Heart left ventricle (tissue), 16 donors: ENCODE measurements at regions of chr1 and their contacts with region 1.

Region 1: DNA sequence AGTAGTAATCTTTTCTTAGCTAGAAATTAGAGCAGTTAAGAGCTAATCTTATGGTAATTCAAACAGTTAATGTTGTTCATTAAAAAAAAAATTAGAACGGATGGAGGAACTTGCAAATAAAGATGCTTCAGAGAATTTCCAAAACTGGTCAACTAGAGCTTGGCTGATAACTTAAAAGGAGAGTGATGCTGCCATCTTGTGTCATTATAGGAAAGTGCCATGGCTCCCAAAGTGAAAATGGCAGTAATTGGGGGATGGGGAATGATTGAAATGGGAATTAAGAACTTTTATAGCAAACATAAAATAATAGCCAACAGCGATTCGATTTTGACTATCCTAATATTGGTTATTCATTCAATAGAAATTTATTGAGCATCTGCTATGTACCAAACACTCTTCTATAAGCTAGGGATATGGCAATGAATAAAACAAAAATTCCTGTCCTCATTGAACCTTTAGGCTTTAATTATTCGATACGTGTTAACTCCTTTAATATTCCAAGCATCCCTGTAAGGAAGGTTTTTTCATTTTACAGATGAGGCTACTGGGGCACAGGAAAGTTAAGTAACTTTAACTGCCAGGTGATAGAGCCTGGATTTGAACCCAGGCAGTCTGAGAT is 5.7 kb upstream of the PLPP3 start:
- DNase-seq: no peak
- ATAC-seq: peak in 3 of 4 donors; percentile 54 to 78 (median 68)
- H3K4me3 ChIP-seq: no peak overlapping the region
- H3K27ac ChIP-seq: no peak overlapping the region
- H3K4me1 ChIP-seq: peaks cover 0 to 9% (median 3%) of the 10 kb centered on the region in 12 donors
- H3K27me3 ChIP-seq: no peaks in the 10 kb centered on the region
- CTCF ChIP-seq: peak; percentile 76 to 91 (median 86)
- POLR2A ChIP-seq: no peak

Region 2: GRCh38 chr1:55140546-55140983 is 1444.5 kb before region 1 on chr1:
- intact Hi-C with region 1: loop called in 5 of 10 experiments (anchors 5 to 10 kb)
- DNase-seq: peak in 4 of 5 donors; percentile 66 to 83 (median 71)
- ATAC-seq: peak; percentile 90 to 98 (median 95)
- H3K4me3 ChIP-seq: no peak overlapping the region
- H3K27ac ChIP-seq: peak overlapping the region in 1 of 12 donors; percentile 59
- H3K4me1 ChIP-seq: peaks cover 0 to 11% (median 0%) of the 10 kb centered on the region in 12 donors
- H3K27me3 ChIP-seq: no peaks in the 10 kb centered on the region
- CTCF ChIP-seq: peak; percentile 67 to 92 (median 84)
- POLR2A ChIP-seq: no peak

Region 3: GRCh38 chr1:55284852-55285251 is 1300.2 kb before region 1 on chr1:
- intact Hi-C with region 1: loop called (anchors 1 to 5 kb)
- DNase-seq: peak in 2 of 5 donors; percentile 36 to 41
- ATAC-seq: peak in 3 of 4 donors; percentile 43 to 73 (median 67)
- H3K4me3 ChIP-seq: no peak overlapping the region
- H3K27ac ChIP-seq: no peak overlapping the region
- H3K4me1 ChIP-seq: no peaks in the 10 kb centered on the region
- H3K27me3 ChIP-seq: no peaks in the 10 kb centered on the region
- CTCF ChIP-seq: peak; percentile 42 to 77 (median 72)
- POLR2A ChIP-seq: no peak

Region 4: GRCh38 chr1:55478742-55479141 is 1106.3 kb before region 1 on chr1:
- intact Hi-C with region 1: loop called in 2 of 10 experiments (anchors 5 kb)
- DNase-seq: no peak
- ATAC-seq: no peak
- H3K4me3 ChIP-seq: no peak overlapping the region
- H3K27ac ChIP-seq: no peak overlapping the region
- H3K4me1 ChIP-seq: peaks cover 0 to 21% (median 0%) of the 10 kb centered on the region in 12 donors
- H3K27me3 ChIP-seq: no peaks in the 10 kb centered on the region
- CTCF ChIP-seq: peak in 6 of 12 donors; percentile 10 to 37 (median 30)
- POLR2A ChIP-seq: no peak

Region 5: DNA sequence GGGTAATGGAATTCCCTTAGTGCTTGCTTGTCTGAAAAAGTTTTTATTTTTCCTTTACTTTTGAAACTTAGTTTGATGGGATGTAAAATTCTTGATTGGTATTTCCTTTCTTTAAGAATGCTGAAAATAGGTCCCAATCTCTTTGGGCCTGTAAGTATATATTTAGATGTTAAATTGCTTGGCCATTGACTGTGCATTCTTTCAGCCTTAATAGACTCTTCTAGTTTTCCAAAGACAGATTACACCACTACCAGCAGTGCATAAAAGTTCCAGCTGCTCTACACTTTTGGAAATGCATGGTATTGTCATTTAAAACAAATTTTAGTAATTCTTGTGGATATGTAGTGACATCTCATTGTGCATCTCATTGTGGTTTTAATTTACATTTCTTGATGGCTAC is 905.0 kb before region 1 on chr1:
- intact Hi-C with region 1: loop called in 1 of 10 experiments (anchors 10 kb)
- DNase-seq: no peak
- ATAC-seq: no peak
- H3K4me3 ChIP-seq: no peak overlapping the region
- H3K27ac ChIP-seq: no peak overlapping the region
- H3K4me1 ChIP-seq: no peaks in the 10 kb centered on the region
- H3K27me3 ChIP-seq: no peaks in the 10 kb centered on the region
- CTCF ChIP-seq: no peak
- POLR2A ChIP-seq: no peak

Region 6: GRCh38 chr1:56291374-56291919 is 293.6 kb before region 1 on chr1:
- intact Hi-C with region 1: loop called in 1 of 10 experiments (anchors 2 kb)
- DNase-seq: peak in 4 of 5 donors; percentile 33 to 74 (median 58)
- ATAC-seq: peak; percentile 29 to 90 (median 86)
- H3K4me3 ChIP-seq: no peak overlapping the region
- H3K27ac ChIP-seq: peak overlapping the region in 9 of 12 donors; percentile 28 to 69 (median 47)
- H3K4me1 ChIP-seq: peaks cover 0 to 24% (median 5%) of the 10 kb centered on the region in 12 donors
- H3K27me3 ChIP-seq: no peaks in the 10 kb centered on the region
- CTCF ChIP-seq: no peak
- POLR2A ChIP-seq: no peak

Region 7: DNA sequence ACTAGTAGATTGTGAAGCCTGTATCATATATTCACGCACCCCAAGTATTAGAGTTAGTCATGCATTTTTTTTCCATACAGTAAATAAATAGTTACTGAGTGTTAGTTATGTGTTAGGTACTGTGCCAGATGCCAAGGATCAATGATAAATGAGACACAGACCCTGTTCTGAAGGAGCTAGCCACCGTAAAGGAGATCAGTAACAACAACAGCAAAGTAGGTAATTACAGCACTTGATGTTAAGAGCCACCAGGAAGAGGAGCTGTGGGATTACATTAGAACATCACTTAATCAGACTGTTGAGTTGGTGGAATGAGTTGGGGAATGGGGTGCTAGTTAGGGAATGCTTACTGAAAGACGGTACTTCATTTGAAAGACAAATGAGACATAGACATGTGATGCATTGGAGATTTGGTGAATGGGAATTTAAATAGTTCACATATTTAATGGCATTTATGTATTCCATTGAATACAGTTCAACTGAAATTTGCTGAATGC is 81.1 kb after region 1 on chr1:
- intact Hi-C with region 1: no loop called
- DNase-seq: no peak
- ATAC-seq: peak in 1 of 4 donors; percentile 34
- H3K4me3 ChIP-seq: no peak overlapping the region
- H3K27ac ChIP-seq: no peak overlapping the region
- H3K4me1 ChIP-seq: peaks cover 0 to 33% (median 2%) of the 10 kb centered on the region in 12 donors
- H3K27me3 ChIP-seq: no peaks in the 10 kb centered on the region
- CTCF ChIP-seq: no peak
- POLR2A ChIP-seq: no peak

Region 8: DNA sequence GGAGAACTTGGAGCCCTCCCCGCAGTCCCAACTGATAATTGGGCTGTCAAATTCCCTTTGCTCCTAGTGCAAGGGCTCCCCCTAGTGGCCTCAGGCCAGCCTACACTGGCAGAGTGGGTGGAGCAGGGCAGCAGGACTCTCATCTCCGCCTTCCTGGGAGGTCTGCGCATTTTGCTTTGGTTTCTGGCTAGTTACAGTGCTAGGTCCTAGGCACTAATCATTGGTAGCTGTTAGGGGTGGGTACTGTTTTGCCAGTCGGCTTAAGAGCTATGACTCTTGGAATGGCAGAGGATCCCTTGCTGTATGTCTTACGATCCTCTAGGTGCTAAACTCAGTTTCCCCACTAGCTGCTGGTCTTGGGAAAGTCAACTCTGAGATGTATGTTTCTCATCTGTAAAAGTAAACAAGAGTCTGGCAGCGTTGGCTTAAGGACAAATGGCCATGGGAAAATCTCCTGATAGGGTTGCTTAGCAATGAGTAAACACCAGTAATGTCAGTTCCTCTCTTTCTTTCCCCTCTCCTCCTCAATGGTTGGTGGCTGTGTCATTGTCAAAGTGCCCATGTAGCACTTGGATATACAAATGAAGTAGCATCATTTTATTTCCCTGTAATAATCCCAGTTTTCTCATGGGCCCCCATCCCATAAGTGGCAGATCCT is 236.2 kb after region 1 on chr1:
- intact Hi-C with region 1: loop called in 2 of 10 experiments (anchors 5 kb)
- DNase-seq: peak; percentile 73 to 86 (median 76)
- ATAC-seq: peak; percentile 38 to 78 (median 67)
- H3K4me3 ChIP-seq: no peak overlapping the region
- H3K27ac ChIP-seq: no peak overlapping the region
- H3K4me1 ChIP-seq: peaks cover 0 to 32% (median 8%) of the 10 kb centered on the region in 12 donors
- H3K27me3 ChIP-seq: peaks cover 0 to 3% (median 0%) of the 10 kb centered on the region in 9 donors
- CTCF ChIP-seq: peak; percentile 86 to 97 (median 92)
- POLR2A ChIP-seq: no peak